Left ventricle myocardium superior (tissue), 1 donor: ENCODE measurements at regions of chr9 and their contacts with region 1.

Region 1: GRCh38 chr9:12719431-12719830 is 26.2 kb downstream of the TYRP1 start:
- DNase-seq: no peak
- ATAC-seq: peak; percentile 58

Region 2: DNA sequence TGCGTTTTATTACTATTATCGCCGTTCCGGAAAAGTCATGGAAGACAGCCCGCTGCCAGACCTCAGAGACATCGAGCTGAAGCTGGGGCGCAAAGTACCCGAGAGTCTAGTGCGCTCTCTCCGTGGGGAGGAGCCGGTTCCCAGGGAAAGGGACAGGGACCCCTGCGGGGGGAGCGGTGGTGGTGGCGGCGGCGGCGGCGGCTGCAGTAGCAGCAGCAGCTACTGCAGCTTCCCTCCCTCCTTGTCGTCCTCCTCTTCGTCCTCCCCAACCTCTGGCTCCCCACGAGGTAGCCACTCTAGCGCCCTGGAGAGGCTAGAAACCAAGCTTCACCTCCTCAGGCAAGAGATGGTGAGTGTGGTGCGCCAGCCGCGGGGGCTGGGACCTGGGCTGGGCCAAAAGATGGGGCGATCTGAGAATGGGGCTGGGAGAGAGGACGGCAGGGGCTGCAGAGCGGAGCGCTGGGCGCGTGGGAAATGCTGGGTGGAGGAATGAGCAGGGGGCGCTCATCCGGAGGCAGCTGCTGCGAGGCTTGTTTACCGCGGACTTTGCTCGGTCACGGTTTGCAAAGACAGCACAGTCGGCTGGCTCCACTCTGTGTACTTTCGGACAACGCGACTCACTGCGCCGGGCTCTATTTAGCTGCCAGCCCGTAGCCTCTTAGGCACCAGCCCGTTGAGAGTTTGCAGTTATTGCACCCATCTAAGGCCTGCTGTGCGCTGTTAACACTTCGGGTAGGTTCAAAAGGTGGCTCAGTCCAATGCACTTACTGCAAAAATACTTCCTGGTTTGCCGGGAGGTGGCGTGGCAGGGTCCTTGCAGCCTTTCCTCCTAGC is 56.5 kb after region 1 on chr9:
- intact Hi-C with region 1: loop called (anchors 10 kb)
- DNase-seq: peak; percentile 54
- ATAC-seq: peak; percentile 95

Region 3: GRCh38 chr9:12884737-12885414 is 165.4 kb after region 1 on chr9:
- intact Hi-C with region 1: loop called (anchors 5 kb)
- DNase-seq: no peak
- ATAC-seq: peak; percentile 66

Region 4: GRCh38 chr9:13088720-13089427 is 369.4 kb after region 1 on chr9:
- intact Hi-C with region 1: loop called (anchors 2 kb)
- DNase-seq: no peak
- ATAC-seq: peak; percentile 51

Region 5: GRCh38 chr9:13358128-13358527 is 638.7 kb after region 1 on chr9:
- intact Hi-C with region 1: no loop called
- DNase-seq: no peak
- ATAC-seq: no peak